Heart right ventricle (tissue), 16 donors: ENCODE measurements at regions of chrX and their contacts with region 1.

Region 1: GRCh38 chrX:24498975-24499374 is 33.9 kb downstream of the PDK3 start:
- DNase-seq: no peak
- ATAC-seq: peak in 2 of 8 donors; percentile 31 to 61
- H3K4me3 ChIP-seq: no peak overlapping the region
- H3K27ac ChIP-seq: no peak overlapping the region
- H3K4me1 ChIP-seq: peaks cover 0 to 20% (median 0%) of the 10 kb centered on the region in 9 donors
- H3K27me3 ChIP-seq: peaks cover 0 to 20% (median 0%) of the 10 kb centered on the region in 7 donors
- CTCF ChIP-seq: peak in 8 of 9 donors; percentile 26 to 61 (median 52)

Region 2: GRCh38 chrX:24259544-24260240 is 239.3 kb before region 1 on chrX:
- intact Hi-C with region 1: loop called in 1 of 10 experiments (anchors 5 kb)
- DNase-seq: peak in 1 of 2 donors; percentile 20
- ATAC-seq: peak in 3 of 8 donors; percentile 47 to 58 (median 52)
- H3K4me3 ChIP-seq: no peak overlapping the region
- H3K27ac ChIP-seq: no peak overlapping the region
- H3K4me1 ChIP-seq: peaks cover 0 to 9% (median 0%) of the 10 kb centered on the region in 9 donors
- H3K27me3 ChIP-seq: peaks cover 0 to 77% (median 0%) of the 10 kb centered on the region in 7 donors
- CTCF ChIP-seq: peak in 8 of 9 donors; percentile 14 to 64 (median 56)

Region 3: GRCh38 chrX:24395775-24396174 is 103.2 kb before region 1 on chrX:
- intact Hi-C with region 1: loop called (anchors 2 to 5 kb)
- DNase-seq: peak in 1 of 2 donors; percentile 64
- ATAC-seq: peak; percentile 61 to 87 (median 82)
- H3K4me3 ChIP-seq: no peak overlapping the region
- H3K27ac ChIP-seq: peak overlapping the region in 3 of 10 donors; percentile 19 to 56 (median 44)
- H3K4me1 ChIP-seq: peaks cover 0 to 7% (median 0%) of the 10 kb centered on the region in 9 donors
- H3K27me3 ChIP-seq: peaks cover 0 to 59% (median 0%) of the 10 kb centered on the region in 7 donors
- CTCF ChIP-seq: peak; percentile 46 to 79 (median 74)